ENCODE measurements at regions of chr1 and their contacts with region 1.

Region 1: DNA sequence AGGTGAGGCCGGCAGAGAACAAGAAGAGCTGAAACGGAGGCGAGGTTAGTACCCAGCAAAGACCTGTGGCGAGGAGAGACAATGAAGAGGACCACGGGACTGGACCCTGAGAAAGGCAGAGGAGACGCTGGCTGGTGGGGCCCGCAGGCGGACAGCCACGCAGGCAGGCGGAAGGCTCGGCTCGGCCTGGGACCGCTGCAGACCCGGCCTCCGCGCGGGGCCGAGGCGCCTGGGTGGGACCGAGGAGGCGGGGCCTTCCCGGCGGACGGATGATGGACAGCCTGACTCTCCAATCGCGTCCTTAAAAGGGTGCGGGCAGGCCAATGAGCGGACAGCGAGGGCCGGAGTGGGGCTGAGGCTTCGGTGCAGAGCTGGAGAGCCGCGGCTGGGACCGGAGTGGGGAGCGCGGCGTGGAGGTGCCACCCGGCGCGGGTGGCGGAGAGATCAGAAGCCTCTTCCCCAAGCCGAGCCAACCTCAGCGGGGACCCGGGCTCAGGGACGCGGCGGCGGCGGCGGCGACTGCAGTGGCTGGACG is at the start of gene MPZL1:
- DNase-seq: peak; percentile 90
- total RNA-seq, gene MPZL1: 104 and 123 TPM in 2 replicates

Region 2: GRCh38 chr1:167774710-167775109 is 53.0 kb after region 1 on chr1:
- in situ Hi-C with region 1: loop called (anchors 5 kb)
- DNase-seq: no peak

Measured in SK-MEL-5 (cell line).